ENCODE measurements at regions of chr4 and their contacts with region 1.

Region 1: DNA sequence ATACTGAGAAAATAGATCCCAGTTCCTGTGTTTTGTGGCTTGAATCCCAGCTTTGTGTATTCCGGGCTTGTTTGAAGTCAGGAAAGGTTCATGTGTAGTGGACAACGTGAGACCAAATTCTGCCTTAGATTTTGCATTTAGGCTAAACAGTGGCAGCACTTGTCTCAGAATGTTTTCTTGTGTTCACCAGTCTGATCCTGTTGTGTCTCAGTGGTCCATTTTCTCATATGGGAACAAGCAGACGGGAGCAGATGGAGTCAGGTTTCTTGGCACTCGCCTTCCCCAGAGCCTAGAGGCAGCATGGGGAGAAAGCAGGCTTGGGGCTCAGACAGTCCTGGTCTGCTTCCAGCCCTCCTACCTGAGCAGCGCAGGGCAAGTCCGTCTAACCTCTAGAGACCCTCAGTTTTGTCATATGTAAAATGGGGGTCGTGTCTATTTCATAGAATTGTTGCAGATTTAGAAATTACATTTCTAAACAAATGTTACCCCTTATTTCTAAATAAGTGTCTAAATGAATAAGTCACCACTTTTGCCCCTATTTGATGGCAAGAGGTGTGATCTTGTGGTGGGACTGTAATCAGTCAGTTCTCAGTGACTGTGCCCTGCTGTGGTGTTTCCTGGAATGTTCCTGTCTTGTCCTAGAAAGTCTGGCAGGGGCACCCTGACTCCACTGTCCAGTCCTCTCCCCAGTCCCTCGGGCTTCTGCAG is 28.3 kb upstream of the MSANTD1 start:
- DNase-seq: peak; percentile 40 to 75
- ATAC-seq: peak; percentile 56 to 71
- H3K4me3 ChIP-seq: no peak overlapping the region
- H3K27ac ChIP-seq: peak overlapping the region; percentile 69 to 81 (median 76)
- H3K4me1 ChIP-seq: peaks cover 18 to 23% of the 10 kb centered on the region in 2 donors
- H3K27me3 ChIP-seq: no peaks in the 10 kb centered on the region
- CTCF ChIP-seq: no peak
- POLR2A ChIP-seq: no peak

Region 2: DNA sequence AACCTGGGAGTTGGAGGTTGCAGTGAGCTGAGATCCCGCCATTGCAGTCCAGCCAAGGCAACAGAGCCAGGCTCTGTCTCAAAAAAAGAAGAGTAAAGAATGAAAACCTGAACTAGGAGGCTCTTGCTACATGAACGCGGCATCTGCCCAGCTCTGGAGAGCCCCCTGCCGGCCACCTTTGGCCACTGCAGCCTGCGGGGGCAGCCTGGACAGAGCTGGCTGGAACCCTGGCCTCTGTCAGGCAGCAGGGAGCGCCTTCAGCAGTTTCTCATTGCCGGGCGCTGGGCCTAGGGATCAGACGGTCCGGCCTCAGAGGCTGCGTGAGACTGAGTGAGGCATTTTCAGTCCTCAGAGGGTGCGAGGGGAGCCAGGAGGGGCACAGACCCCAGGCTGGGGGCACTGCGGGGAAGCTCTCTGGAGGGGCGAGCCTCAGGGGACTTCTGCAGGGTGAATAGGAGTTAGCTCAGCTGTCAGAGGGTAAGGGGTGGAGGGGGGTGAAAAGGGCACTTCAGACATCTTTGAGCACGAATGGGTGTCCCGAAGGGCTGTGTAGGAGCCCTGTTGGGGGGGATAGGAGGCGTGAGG is 260.0 kb after region 1 on chr4:
- in situ Hi-C with region 1: no loop called
- intact Hi-C with region 1: loop called (anchors 2 kb)
- DNase-seq: peak; percentile 47 to 82
- ATAC-seq: peak in 1 of 2 donors; percentile 22
- H3K4me3 ChIP-seq: no peak overlapping the region
- H3K27ac ChIP-seq: peak overlapping the region; percentile 99 to 100 (median 99)
- H3K4me1 ChIP-seq: peaks cover 49 to 57% of the 10 kb centered on the region in 2 donors
- H3K27me3 ChIP-seq: no peaks in the 10 kb centered on the region
- CTCF ChIP-seq: peak; percentile 98 to 100 (median 99)
- POLR2A ChIP-seq: peak in 1 of 2 donors; percentile 14